CD14-positive monocyte (primary cell): ENCODE measurements at regions of chr4 and their contacts with region 1.

Region 1: GRCh38 chr4:3233391-3234071 is 15.4 kb upstream of the MSANTD1 start:
- DNase-seq: no peak
- H3K4me3 ChIP-seq: no peak overlapping the region
- H3K4me3 Mint-ChIP-seq: no peak overlapping the region
- H3K27ac ChIP-seq: peak overlapping the region in 1 of 2 donors; percentile 14
- H3K27ac Mint-ChIP-seq: peak overlapping the region in 4 of 7 donors; percentile 25 to 60 (median 40)
- H3K4me1 ChIP-seq: no peaks in the 10 kb centered on the region
- H3K4me1 Mint-ChIP-seq: no peaks in the 10 kb centered on the region
- H3K27me3 ChIP-seq: no peaks in the 10 kb centered on the region
- H3K27me3 Mint-ChIP-seq: peaks cover 0 to 2% (median 0%) of the 10 kb centered on the region in 3 donors
- CTCF ChIP-seq: no peak

Region 2: GRCh38 chr4:3283483-3284280 is 50.2 kb after region 1 on chr4:
- intact Hi-C with region 1: loop called in 1 of 2 experiments (anchors 5 kb)
- DNase-seq: no peak
- H3K4me3 ChIP-seq: no peak overlapping the region
- H3K4me3 Mint-ChIP-seq: no peak overlapping the region
- H3K27ac ChIP-seq: no peak overlapping the region
- H3K27ac Mint-ChIP-seq: no peak overlapping the region
- H3K4me1 ChIP-seq: peaks cover 35 to 40% of the 10 kb centered on the region in 2 donors
- H3K4me1 Mint-ChIP-seq: peaks cover 37% of the 10 kb centered on the region
- H3K27me3 ChIP-seq: no peaks in the 10 kb centered on the region
- H3K27me3 Mint-ChIP-seq: peaks cover 10 to 25% (median 19%) of the 10 kb centered on the region in 3 donors
- CTCF ChIP-seq: no peak